Activated T-helper 1 cell treated with anti-CD3 and anti-CD28 coated beads, Interleukin-12 subunit alpha, Interleukin-12 subunit beta, Interleukin-2, Interleukin-4 antibody, amounts not matched to agents 30 ng/mL and 10 ng/mL and 1 ng/mL, durations not matched to agents 14 hours and 24 hours and 36 hours (primary cell): ENCODE measurements at regions of chr19 and their contacts with region 1.

Region 1: DNA sequence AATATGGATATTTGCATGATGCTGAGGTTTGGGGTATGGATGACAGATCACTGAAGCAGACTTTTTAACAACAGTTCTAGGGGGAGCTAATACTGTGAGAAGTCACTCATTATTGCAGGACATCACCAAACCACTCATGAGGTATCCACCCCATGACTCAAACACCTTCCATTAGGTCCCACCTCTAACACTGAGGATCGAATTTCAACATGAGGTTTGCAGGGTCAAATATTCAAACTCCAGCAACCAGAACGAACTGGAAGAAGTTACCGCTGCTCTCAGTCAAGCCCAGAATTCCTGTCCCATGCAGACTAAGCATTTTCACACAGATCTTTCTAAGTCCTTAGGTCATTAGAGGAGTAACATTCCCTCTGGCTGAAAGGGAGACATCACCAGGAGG is 758.9 kb downstream of the UQCRFS1 start:
- DNase-seq: no peak
- H3K4me3 Mint-ChIP-seq: no peak overlapping the region
- H3K27ac Mint-ChIP-seq: no peak overlapping the region
- H3K4me1 Mint-ChIP-seq: peaks cover 21% of the 10 kb centered on the region
- H3K27me3 Mint-ChIP-seq: no peaks in the 10 kb centered on the region

Region 2: GRCh38 chr19:28242297-28242927 is 211.7 kb before region 1 on chr19:
- intact Hi-C with region 1: loop called (anchors 10 kb)
- DNase-seq: peak; percentile 26
- H3K4me3 Mint-ChIP-seq: no peak overlapping the region
- H3K27ac Mint-ChIP-seq: no peak overlapping the region
- H3K4me1 Mint-ChIP-seq: peaks cover 6% of the 10 kb centered on the region
- H3K27me3 Mint-ChIP-seq: peaks cover 2% of the 10 kb centered on the region

Region 3: DNA sequence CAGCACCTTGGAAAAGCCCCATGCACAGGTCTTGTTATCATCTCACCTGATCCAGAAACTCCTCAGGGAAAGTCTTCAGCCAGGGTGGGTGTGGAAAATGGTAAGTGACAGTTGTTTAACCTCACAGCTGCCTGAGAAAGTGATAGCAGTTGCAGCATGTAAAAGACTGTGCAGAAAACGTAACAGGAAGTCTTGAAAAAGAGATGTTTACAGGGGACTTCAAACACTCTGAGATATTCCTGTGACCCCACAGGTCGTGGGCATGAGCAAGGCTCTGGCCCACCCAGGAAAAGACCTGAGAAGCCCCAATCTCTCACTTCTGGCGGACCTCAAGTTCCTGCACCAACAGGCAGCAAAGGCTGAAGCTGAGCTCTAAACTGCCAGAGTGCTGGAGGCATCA is 68.0 kb before region 1 on chr19:
- intact Hi-C with region 1: loop called (anchors 2 kb)
- DNase-seq: no peak
- H3K4me3 Mint-ChIP-seq: peak overlapping the region; percentile 75
- H3K27ac Mint-ChIP-seq: peak overlapping the region; percentile 86
- H3K4me1 Mint-ChIP-seq: peaks cover 73% of the 10 kb centered on the region
- H3K27me3 Mint-ChIP-seq: no peaks in the 10 kb centered on the region

Region 4: GRCh38 chr19:28466107-28467045 is 12.3 kb after region 1 on chr19:
- intact Hi-C with region 1: loop called (anchors 1 kb)
- DNase-seq: peak; percentile 52
- H3K4me3 Mint-ChIP-seq: no peak overlapping the region
- H3K27ac Mint-ChIP-seq: peak overlapping the region; percentile 68
- H3K4me1 Mint-ChIP-seq: peaks cover 75% of the 10 kb centered on the region
- H3K27me3 Mint-ChIP-seq: no peaks in the 10 kb centered on the region